Heart right ventricle (tissue), 16 donors: ENCODE measurements at regions of chr14 and their contacts with region 1.

Region 1: DNA sequence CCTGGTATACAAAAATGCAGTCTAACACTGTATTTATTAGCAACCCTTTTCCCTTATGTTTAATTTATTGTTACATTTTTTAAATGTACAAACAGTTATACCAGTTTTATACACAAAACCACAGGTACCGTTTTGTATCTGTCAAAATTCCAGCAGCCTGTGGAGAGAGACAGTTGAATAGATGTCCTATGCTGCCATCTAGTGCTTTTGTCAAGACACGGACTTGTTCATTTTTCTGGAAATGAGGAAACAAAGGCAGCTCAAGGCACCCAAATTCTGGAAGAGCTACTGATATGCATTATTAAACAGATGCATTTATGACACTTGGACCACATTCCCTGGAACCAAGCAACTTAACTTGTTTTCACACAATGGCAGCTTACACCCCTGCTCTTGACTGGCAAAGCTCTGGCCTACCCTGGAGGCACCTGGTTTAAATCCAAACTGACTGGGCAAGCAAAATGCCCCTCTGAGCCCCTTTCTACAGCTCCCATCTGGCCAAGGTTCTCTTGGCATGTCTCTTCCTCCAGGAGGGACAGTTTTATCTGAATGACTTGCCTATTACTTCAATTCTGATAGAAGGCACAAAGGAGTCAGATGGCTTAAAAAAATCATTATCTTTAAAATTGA is 286.9 kb upstream of the PRKD1 start:
- DNase-seq: no peak
- ATAC-seq: peak in 3 of 8 donors; percentile 47 to 62 (median 61)
- H3K4me3 ChIP-seq: no peak overlapping the region
- H3K27ac ChIP-seq: no peak overlapping the region
- H3K4me1 ChIP-seq: no peaks in the 10 kb centered on the region
- H3K27me3 ChIP-seq: peaks cover 0 to 4% (median 0%) of the 10 kb centered on the region in 7 donors
- CTCF ChIP-seq: peak in 7 of 9 donors; percentile 46 to 66 (median 61)

Region 2: GRCh38 chr14:28756884-28757570 is 1457.5 kb before region 1 on chr14:
- intact Hi-C with region 1: loop called in 7 of 10 experiments (anchors 2 to 10 kb)
- DNase-seq: no peak
- ATAC-seq: no peak
- H3K4me3 ChIP-seq: no peak overlapping the region
- H3K27ac ChIP-seq: no peak overlapping the region
- H3K4me1 ChIP-seq: peaks cover 0 to 15% (median 3%) of the 10 kb centered on the region in 9 donors
- H3K27me3 ChIP-seq: peaks cover 26 to 100% (median 97%) of the 10 kb centered on the region in 7 donors
- CTCF ChIP-seq: peak in 7 of 9 donors; percentile 9 to 56 (median 44)

Region 3: DNA sequence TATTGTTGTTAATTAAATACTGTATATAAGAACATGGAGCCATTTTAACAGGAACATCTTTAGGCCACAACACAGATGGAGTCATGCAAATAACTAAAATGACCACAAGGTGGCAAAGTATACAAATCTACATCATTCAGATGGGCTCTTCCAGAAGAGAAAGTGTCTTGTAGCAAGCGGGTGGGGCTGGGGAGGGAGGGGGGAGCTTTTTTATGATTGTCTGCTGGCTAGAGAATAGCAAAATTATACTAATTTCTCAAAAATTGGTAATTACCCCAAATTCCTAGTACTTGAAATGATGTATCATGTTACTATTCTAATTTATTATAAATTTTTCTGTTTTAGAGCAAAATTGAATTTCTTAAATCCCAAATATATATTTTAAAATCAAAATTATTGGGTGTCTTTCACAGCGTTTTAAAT is 665.6 kb before region 1 on chr14:
- intact Hi-C with region 1: loop called in 9 of 10 experiments (anchors 2 to 10 kb)
- DNase-seq: peak in 1 of 2 donors; percentile 15
- ATAC-seq: peak in 7 of 8 donors; percentile 61 to 82 (median 73)
- H3K4me3 ChIP-seq: no peak overlapping the region
- H3K27ac ChIP-seq: no peak overlapping the region
- H3K4me1 ChIP-seq: peaks cover 0 to 5% (median 0%) of the 10 kb centered on the region in 9 donors
- H3K27me3 ChIP-seq: peaks cover 0 to 1% (median 0%) of the 10 kb centered on the region in 7 donors
- CTCF ChIP-seq: peak; percentile 44 to 74 (median 67)

Region 4: DNA sequence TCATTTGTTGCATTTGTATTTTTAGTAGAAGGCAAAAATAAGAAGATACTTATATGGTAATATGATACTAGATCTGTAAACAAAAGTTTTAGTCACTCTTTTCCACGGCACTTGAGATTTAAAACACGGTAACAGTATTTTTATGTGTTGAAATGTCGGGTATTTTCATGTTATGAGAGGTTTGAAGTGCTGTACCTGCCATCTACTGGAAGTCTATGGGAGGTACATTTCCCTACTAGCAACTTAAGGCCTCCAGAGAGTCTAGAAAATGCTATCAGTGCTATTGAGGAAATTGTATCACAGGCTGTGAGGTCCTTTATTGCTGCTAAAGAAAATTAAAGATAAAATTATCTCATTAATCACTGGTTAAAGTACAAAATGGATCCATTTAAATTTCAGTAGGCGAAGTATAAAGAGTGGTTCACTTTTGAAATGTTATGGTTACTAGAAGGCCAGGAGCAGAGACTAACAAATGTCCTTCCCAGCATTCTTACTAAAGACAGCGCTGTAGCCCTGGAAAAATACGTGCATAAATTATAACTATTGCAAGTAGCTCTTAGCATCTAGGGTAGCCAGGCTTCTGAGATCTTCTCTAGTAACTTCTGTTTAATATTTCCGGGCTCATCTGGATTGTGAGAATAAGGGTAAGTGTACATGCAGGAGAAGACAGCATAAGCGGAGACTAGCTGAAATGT is 209.3 kb before region 1 on chr14:
- intact Hi-C with region 1: loop called in 1 of 10 experiments (anchors 5 kb)
- DNase-seq: no peak
- ATAC-seq: peak in 7 of 8 donors; percentile 43 to 82 (median 62)
- H3K4me3 ChIP-seq: no peak overlapping the region
- H3K27ac ChIP-seq: no peak overlapping the region
- H3K4me1 ChIP-seq: no peaks in the 10 kb centered on the region
- H3K27me3 ChIP-seq: no peaks in the 10 kb centered on the region
- CTCF ChIP-seq: peak; percentile 57 to 88 (median 80)

Region 5: GRCh38 chr14:30185832-30186231 is 28.7 kb before region 1 on chr14:
- intact Hi-C with region 1: no loop called
- DNase-seq: no peak
- ATAC-seq: no peak
- H3K4me3 ChIP-seq: no peak overlapping the region
- H3K27ac ChIP-seq: no peak overlapping the region
- H3K4me1 ChIP-seq: no peaks in the 10 kb centered on the region
- H3K27me3 ChIP-seq: no peaks in the 10 kb centered on the region
- CTCF ChIP-seq: no peak